CD14-positive monocyte (primary cell): ENCODE measurements at regions of chr1 and their contacts with region 1.

Region 1: DNA sequence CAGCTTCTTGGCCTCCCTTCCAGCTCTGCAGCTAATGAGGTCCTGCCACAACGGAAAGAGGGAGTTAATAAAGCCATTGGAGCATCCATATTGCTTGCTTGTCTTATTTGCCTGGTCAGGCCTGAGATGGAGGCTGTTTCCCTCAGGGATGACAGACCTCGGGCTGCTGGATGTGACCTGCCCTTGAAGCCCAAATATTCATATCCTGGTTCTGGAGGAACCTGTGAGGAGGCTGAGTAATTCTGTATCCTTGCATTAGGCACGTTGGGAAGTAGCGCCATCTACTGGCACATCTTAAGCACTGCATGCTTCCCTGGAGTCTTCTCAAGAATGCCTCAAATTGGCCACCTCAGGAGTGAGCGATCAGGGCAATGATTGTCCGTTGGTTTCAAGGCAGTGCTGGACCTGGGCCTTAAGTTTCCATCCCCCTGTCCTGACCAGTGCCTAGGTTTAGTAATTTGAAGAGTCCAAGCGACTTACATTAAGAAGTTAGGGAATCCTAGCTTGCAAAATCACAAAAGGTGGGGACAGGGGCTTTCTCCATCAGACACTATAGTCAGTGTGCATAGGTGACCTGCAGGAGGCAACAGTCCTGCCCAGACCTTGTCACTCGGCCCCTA is 13.8 kb upstream of the NASP start:
- DNase-seq: peak; percentile 69 to 82 (median 81)
- H3K4me3 ChIP-seq: no peak overlapping the region
- H3K4me3 Mint-ChIP-seq: no peak overlapping the region
- H3K27ac ChIP-seq: peak overlapping the region in 1 of 2 donors; percentile 56
- H3K27ac Mint-ChIP-seq: peak overlapping the region in 4 of 7 donors; percentile 3 to 81 (median 44)
- H3K4me1 ChIP-seq: peaks cover 4 to 6% of the 10 kb centered on the region in 2 donors
- H3K4me1 Mint-ChIP-seq: peaks cover 11% of the 10 kb centered on the region
- H3K27me3 ChIP-seq: no peaks in the 10 kb centered on the region
- H3K27me3 Mint-ChIP-seq: peaks cover 0 to 1% (median 0%) of the 10 kb centered on the region in 3 donors
- CTCF ChIP-seq: peak; percentile 94

Region 2: GRCh38 chr1:45339789-45340570 is 230.1 kb before region 1 on chr1 and contains the starts of genes MUTYH and TOE1:
- intact Hi-C with region 1: loop called in 1 of 2 experiments (anchors 10 kb)
- DNase-seq: peak; percentile 79 to 86 (median 79)
- H3K4me3 ChIP-seq: peak within 1 kb of the TSS; percentile 64 to 94 (median 85)
- H3K4me3 Mint-ChIP-seq: peak within 1 kb of the TSS; percentile 99 to 100
- H3K27ac ChIP-seq: peak within 1 kb of the TSS; percentile 94 to 99
- H3K27ac Mint-ChIP-seq: peak within 1 kb of the TSS; percentile 94 to 99 (median 96)
- H3K4me1 ChIP-seq: peaks cover 34 to 36% of the 10 kb centered on the region in 2 donors
- H3K4me1 Mint-ChIP-seq: peaks cover 39% of the 10 kb centered on the region
- H3K27me3 ChIP-seq: no peaks in the 10 kb centered on the region
- H3K27me3 Mint-ChIP-seq: peaks cover 0 to 5% (median 0%) of the 10 kb centered on the region in 3 donors
- CTCF ChIP-seq: no peak
- polyA plus RNA-seq, gene MUTYH: 6.7 to 22.9 (median 8.1) TPM
- polyA plus RNA-seq, gene TOE1: 3.9 to 8.1 (median 5.8) TPM

Region 3: DNA sequence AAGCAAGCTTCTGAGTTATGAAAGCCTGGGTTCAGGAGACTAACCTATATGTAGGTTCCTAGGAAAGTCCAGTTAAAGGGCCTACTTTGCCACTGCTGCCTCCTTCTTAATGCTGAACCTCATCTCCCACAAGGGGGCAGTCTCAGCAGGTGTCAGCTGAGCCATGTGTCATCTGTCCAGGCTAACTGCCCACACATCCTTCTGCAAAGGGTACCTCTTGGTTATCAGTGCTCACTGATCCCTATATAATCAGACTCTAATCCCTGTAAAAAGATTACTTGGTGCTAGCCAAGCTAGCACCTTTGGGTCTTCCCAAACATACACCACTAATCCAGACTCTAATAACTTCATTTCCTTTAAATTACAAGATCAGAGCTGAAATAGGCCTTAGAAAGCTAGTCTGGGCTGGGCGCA is 57.4 kb before region 1 on chr1:
- intact Hi-C with region 1: loop called (anchors 1 to 2 kb)
- DNase-seq: peak; percentile 66 to 77 (median 77)
- H3K4me3 ChIP-seq: no peak overlapping the region
- H3K4me3 Mint-ChIP-seq: no peak overlapping the region
- H3K27ac ChIP-seq: no peak overlapping the region
- H3K27ac Mint-ChIP-seq: peak overlapping the region in 2 of 7 donors; percentile 14 to 20
- H3K4me1 ChIP-seq: no peaks in the 10 kb centered on the region
- H3K4me1 Mint-ChIP-seq: no peaks in the 10 kb centered on the region
- H3K27me3 ChIP-seq: no peaks in the 10 kb centered on the region
- H3K27me3 Mint-ChIP-seq: no peaks in the 10 kb centered on the region
- CTCF ChIP-seq: peak; percentile 78

Region 4: DNA sequence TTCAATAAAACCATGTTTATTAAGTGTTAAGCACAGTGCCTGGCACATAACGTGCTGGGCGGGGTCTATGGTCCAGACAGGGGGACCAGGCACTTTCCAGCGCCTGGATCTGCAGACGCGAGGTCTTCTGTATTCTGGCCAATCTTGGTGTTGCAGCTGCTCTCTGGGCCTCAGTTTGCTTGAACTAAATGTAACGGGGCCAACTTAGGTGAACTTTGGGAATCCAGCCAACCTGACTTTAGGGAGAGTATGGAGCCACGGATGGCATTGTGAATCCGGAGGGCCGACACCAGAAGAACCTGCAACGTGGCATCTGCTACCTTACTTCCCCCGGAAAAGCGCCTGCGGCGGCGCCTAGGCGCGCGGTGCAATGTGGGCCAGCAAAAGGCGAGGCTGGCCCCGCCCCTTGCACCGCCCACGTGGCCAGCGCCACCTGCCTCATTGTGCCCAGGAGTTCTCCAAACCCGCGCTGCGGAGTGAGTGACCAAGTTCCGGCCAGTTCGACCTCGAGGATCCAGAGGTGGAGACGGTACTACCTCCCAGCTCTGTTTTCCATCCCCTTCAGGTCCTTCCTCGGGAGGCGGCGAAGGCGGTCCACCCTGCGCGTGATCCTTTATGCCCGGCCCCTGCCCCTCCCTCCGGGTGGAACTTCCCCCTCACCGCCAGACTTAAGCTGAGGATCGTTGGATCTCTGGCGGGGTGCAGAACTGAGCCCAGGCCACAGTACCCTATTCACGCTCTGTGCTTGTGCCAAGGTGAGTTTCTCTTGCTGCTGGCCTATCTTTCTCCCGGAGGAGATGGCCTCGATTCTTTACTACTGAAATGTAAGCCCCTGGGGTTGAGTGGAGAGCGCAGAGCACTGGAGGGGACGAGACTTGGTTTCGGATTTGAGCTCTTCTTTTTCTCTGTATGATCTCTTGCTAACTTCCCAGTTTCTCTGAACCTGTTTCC is 19.4 kb before region 1 on chr1 and contains the start of gene AKR1A1:
- intact Hi-C with region 1: loop called in 1 of 2 experiments (anchors 2 kb)
- DNase-seq: peak; percentile 81 to 86 (median 85)
- H3K4me3 ChIP-seq: peak within 1 kb of the TSS; percentile 81 to 95 (median 89)
- H3K4me3 Mint-ChIP-seq: peak within 1 kb of the TSS; percentile 97 to 100
- H3K27ac ChIP-seq: peak within 1 kb of the TSS; percentile 88 to 95
- H3K27ac Mint-ChIP-seq: peak within 1 kb of the TSS; percentile 94 to 99 (median 98)
- H3K4me1 ChIP-seq: peaks cover 23 to 33% of the 10 kb centered on the region in 2 donors
- H3K4me1 Mint-ChIP-seq: peaks cover 22% of the 10 kb centered on the region
- H3K27me3 ChIP-seq: no peaks in the 10 kb centered on the region
- H3K27me3 Mint-ChIP-seq: peaks cover 3 to 8% (median 6%) of the 10 kb centered on the region in 3 donors
- CTCF ChIP-seq: no peak
- polyA plus RNA-seq, gene AKR1A1: 219 to 245 (median 219) TPM